ENCODE measurements at regions of chr17 and their contacts with region 1.

Region 1: DNA sequence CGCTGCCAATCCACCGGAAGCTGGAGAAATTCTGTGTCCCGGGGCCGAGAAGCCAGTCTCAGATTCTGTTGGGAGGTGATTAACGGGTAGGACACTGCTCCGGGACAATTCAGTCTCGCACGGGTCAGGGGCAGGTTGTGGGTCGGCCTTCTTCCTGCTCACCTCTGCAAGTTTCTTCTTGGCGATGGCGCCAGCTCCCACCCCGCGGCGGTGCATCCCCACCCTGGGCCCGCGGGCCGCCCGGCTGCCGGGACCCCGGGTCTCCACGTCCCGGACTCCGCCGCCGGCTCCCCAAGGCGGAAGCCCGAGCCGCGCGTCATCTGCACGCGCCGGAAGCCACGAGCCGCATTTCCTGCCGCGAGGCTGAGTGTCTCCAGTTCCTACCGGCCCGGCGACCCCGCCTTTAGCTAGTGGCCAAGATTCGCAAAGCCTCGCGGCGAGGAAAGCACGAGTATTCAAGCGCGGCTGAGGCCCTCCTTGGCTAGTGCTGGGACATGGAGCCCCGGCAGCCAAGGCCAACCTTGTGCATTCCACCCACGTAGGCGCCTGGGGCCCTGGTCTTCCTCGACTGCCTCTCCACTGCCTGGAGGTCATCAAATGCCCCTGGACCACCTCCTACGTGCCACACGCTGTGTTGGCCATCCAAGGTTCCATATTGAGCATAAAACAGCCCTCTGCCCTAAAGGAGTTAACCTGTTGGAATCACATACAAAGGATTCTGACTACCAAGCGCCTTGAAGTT is at the start of gene SNF8:
- DNase-seq: peak; percentile 98
- ATAC-seq: peak; percentile 97
- H3K4me3 Mint-ChIP-seq: peak within 1 kb of the TSS; percentile 100
- H3K27ac Mint-ChIP-seq: peak within 1 kb of the TSS; percentile 100
- H3K4me1 Mint-ChIP-seq: peaks cover 11% of the 10 kb centered on the region
- H3K27me3 Mint-ChIP-seq: peaks cover 2% of the 10 kb centered on the region
- total RNA-seq, gene SNF8: 82.6 to 96.2 TPM

Region 2: DNA sequence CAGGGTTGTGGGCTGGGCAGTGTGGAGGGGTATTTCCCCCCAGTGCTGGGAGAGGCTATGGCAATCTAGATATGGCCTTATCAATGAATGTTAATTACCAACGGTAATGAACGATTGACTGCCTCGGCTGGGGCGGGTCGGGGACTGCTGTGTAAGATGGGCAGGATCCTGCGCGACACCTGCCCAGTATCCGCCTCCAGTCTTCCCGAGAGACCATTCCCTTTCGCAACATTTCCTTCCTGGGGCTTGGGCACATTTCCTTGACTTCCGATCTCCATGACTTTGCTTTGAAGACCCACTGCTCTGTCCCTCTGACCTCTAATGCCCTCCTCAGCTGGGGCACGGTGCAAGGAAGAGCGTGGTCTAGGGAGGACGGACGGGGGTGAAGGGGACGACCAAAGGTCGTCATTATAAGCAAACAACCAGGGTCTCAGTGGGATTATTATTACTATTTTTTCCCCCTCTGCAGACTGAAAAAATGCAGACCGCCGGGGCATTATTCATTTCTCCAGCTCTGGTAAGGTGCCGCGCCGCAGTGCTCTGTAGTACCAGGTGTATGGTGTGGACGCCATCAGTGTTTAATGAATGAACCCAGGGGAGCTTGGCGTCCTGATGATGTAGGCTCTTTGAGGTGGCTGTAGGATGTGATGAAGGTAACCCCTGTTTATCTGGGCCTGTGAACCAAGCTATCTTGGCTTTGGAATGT is 51.6 kb before region 1 on chr17:
- POLR2A ChIA-PET with region 1: interaction called, 12 read pairs
- DNase-seq: no peak
- ATAC-seq: no peak
- H3K4me3 Mint-ChIP-seq: peak overlapping the region; percentile 92
- H3K27ac Mint-ChIP-seq: peak overlapping the region; percentile 86
- H3K4me1 Mint-ChIP-seq: peaks cover 22% of the 10 kb centered on the region
- H3K27me3 Mint-ChIP-seq: no peaks in the 10 kb centered on the region

Region 3: GRCh38 chr17:48908047-48908843 is 36.4 kb before region 1 on chr17 and contains the start of gene UBE2Z:
- POLR2A ChIA-PET with region 1: interaction called, 39 read pairs
- DNase-seq: peak; percentile 88
- ATAC-seq: peak; percentile 86
- H3K4me3 Mint-ChIP-seq: peak within 1 kb of the TSS; percentile 92
- H3K27ac Mint-ChIP-seq: peak within 1 kb of the TSS; percentile 93
- H3K4me1 Mint-ChIP-seq: peaks cover 40% of the 10 kb centered on the region
- H3K27me3 Mint-ChIP-seq: no peaks in the 10 kb centered on the region
- total RNA-seq, gene UBE2Z: 71.6 to 74.7 TPM

Region 4: GRCh38 chr17:48961516-48962233 is 17.0 kb after region 1 on chr17:
- POLR2A ChIA-PET with region 1: no interaction called
- DNase-seq: no peak
- ATAC-seq: no peak
- H3K4me3 Mint-ChIP-seq: no peak overlapping the region
- H3K27ac Mint-ChIP-seq: no peak overlapping the region
- H3K4me1 Mint-ChIP-seq: no peaks in the 10 kb centered on the region
- H3K27me3 Mint-ChIP-seq: peaks cover 28% of the 10 kb centered on the region

Region 5: GRCh38 chr17:48973806-48974205 is 29.1 kb after region 1 on chr17:
- POLR2A ChIA-PET with region 1: no interaction called
- DNase-seq: no peak
- ATAC-seq: no peak
- H3K4me3 Mint-ChIP-seq: no peak overlapping the region
- H3K27ac Mint-ChIP-seq: no peak overlapping the region
- H3K4me1 Mint-ChIP-seq: peaks cover 2% of the 10 kb centered on the region
- H3K27me3 Mint-ChIP-seq: peaks cover 27% of the 10 kb centered on the region

Region 6: GRCh38 chr17:48997083-48997826 is 52.6 kb after region 1 on chr17 and contains the start of gene IGF2BP1:
- POLR2A ChIA-PET with region 1: no interaction called
- DNase-seq: peak; percentile 50
- ATAC-seq: no peak
- H3K4me3 Mint-ChIP-seq: peak within 1 kb of the TSS; percentile 60
- H3K27ac Mint-ChIP-seq: peak within 1 kb of the TSS; percentile 34
- H3K4me1 Mint-ChIP-seq: peaks cover 15% of the 10 kb centered on the region
- H3K27me3 Mint-ChIP-seq: peaks cover 87% of the 10 kb centered on the region
- total RNA-seq, gene IGF2BP1: not detected